ENCODE measurements at regions of chr3 and their contacts with region 1.

Region 1: DNA sequence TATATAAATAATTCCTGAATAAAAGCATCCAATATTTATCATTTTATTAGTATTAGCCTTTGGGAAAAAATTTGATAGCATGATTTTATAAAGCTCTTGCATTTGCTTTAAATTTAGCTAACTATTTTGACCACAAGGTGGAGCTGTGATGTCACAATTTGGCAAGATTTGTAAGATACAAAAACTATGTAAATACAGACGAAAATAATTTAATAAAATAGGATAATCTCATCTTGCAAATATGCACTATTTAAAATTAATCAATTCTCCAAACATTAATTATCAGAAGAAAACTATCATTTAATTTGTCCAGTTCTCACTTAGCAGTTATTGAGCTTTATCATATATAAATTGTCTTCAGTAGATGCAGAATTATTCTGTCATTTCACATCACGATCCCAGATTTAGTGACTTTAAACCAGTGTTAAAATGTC is 95.4 kb downstream of the PLOD2 start:
- DNase-seq: peak; percentile 75
- H3K4me3 ChIP-seq: no peak overlapping the region
- H3K27ac ChIP-seq: no peak overlapping the region
- H3K4me1 ChIP-seq: no peaks in the 10 kb centered on the region
- H3K27me3 ChIP-seq: no peaks in the 10 kb centered on the region
- CTCF ChIP-seq: peak; percentile 84

Region 2: GRCh38 chr3:146148468-146148931 is 82.9 kb after region 1 on chr3:
- CTCF ChIA-PET with region 1: interaction called, 5 read pairs
- POLR2A ChIA-PET with region 1: no interaction called
- intact Hi-C with region 1: loop called (anchors 5 kb)
- DNase-seq: peak; percentile 41
- H3K4me3 ChIP-seq: no peak overlapping the region
- H3K27ac ChIP-seq: no peak overlapping the region
- H3K4me1 ChIP-seq: peaks cover 37% of the 10 kb centered on the region
- H3K27me3 ChIP-seq: no peaks in the 10 kb centered on the region
- CTCF ChIP-seq: peak; percentile 58; the same call in 1 of the 2 replicates

Region 3: GRCh38 chr3:146160964-146161662 is 95.5 kb after region 1 on chr3 and contains the start of gene PLOD2:
- CTCF ChIA-PET with region 1: interaction called, 14 read pairs
- POLR2A ChIA-PET with region 1: no interaction called
- intact Hi-C with region 1: no loop called
- DNase-seq: peak; percentile 82
- H3K4me3 ChIP-seq: peak within 1 kb of the TSS; percentile 82
- H3K27ac ChIP-seq: peak within 1 kb of the TSS; percentile 85
- H3K4me1 ChIP-seq: peaks cover 32% of the 10 kb centered on the region
- H3K27me3 ChIP-seq: no peaks in the 10 kb centered on the region
- CTCF ChIP-seq: no peak
- total RNA-seq, gene PLOD2: 34.6 and 35.2 TPM in 2 replicates

Region 4: DNA sequence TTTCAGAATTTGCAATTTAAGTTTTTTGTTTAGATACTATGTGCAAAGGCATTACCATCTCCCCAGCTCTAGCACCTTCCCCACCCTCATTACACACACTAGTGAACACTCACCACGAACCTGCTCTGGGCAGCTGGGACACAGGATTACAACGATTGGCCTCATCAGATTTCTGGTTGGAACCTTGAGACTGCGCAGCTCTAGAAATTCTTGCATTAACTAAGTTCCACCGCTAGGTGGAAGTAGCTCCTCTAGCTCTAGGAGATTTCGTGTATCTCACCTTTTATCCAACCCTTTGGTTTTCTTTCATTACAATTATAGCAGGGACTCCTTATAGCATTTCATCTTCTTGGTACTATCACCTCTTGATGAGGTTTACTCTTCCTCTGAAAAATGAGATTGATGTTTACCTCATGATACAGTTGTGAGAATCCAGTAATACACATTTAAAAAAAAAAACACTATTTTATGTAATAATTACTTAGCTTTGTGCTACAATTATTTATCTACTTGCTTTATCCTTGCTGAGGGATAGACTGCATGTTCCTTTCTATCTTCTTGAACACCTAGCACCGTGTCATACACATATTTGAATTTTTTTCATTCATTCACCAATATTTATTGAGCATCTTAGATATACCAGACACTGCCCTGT is 124.1 kb after region 1 on chr3:
- CTCF ChIA-PET with region 1: interaction called, 37 read pairs
- POLR2A ChIA-PET with region 1: no interaction called
- intact Hi-C with region 1: loop called (anchors 2 kb)
- DNase-seq: peak; percentile 71
- H3K4me3 ChIP-seq: no peak overlapping the region
- H3K27ac ChIP-seq: no peak overlapping the region
- H3K4me1 ChIP-seq: peaks cover under 1% of the 10 kb centered on the region
- H3K27me3 ChIP-seq: no peaks in the 10 kb centered on the region
- CTCF ChIP-seq: peak; percentile 75

Region 5: DNA sequence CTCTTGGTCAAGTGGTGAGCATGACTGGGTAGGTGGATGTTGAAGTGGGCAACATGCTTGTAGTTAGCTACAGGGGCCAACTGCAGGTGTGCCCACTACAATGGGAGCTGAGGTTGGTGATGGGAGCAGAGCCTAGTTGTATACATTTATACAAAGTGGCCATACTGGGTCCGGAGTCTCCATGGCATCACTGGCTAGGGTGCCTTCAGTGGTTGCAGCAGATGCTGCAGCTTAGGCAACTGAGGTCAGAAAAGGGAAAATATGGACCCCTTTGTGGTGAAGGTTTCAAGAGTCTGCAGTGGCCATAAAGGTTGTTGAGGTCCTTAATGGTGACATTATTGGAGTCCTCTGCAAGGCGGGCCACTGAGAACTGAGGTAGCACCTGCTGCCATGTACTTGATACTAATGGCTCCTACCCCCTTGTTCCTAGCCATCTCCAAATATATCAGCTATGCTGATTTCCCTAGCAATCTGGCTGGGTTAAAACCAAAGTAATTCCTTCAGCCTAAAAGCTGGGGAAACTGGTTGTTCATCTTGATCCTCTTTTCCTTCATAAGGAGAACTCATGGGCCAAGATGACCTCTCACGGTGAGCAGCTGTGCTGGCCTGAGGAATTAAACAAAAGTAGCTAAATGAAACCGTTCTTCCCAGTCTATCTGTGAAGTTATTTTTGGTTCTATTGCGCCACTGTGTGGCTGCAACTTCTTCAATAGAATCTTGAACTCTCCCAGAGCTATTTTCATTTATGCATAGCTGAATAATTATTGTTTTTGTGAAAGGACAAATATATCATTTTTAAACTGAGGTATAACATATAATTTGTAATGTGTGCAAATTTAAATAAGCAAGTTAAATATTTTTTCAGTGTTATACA is 261.3 kb after region 1 on chr3:
- CTCF ChIA-PET with region 1: interaction called, 13 read pairs
- POLR2A ChIA-PET with region 1: interaction called, 4 read pairs
- intact Hi-C with region 1: loop called (anchors 2 kb)
- DNase-seq: peak; percentile 68
- H3K4me3 ChIP-seq: no peak overlapping the region
- H3K27ac ChIP-seq: no peak overlapping the region
- H3K4me1 ChIP-seq: no peaks in the 10 kb centered on the region
- H3K27me3 ChIP-seq: no peaks in the 10 kb centered on the region
- CTCF ChIP-seq: peak; percentile 74

Region 6: DNA sequence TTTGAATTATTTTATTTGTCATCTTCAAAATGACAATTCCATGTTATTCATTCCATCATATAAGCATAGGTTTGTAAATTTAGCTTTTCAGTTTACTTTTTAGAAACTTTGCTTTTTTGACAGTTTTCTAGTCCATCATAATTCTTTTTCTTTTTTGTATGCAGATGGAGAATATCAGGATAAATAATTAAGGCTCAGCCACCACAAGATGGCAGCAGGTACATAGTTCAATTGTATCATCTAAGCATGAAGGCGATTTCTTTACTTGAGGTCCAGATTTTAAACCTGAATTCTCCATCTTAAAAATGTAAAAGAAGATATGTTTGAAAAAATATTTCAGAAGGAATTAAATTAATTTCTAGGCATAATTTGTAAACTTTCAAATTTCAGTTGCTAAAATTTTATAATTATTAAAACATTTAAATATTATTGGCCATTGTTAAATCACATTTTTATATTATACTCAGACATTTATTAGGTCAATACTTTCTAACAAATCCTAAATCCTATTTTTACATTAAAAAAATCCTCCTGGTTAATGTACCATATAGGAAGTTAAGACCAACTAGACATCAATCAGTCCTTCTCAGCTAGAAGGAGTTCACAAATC is 524.4 kb after region 1 on chr3:
- CTCF ChIA-PET with region 1: no interaction called
- POLR2A ChIA-PET with region 1: no interaction called
- intact Hi-C with region 1: loop called (anchors 10 kb)
- DNase-seq: peak; percentile 60
- H3K4me3 ChIP-seq: no peak overlapping the region
- H3K27ac ChIP-seq: no peak overlapping the region
- H3K4me1 ChIP-seq: no peaks in the 10 kb centered on the region
- H3K27me3 ChIP-seq: no peaks in the 10 kb centered on the region
- CTCF ChIP-seq: peak; percentile 71

Measured in A673 (cell line).